ENCODE measurements at regions of chr22 and their contacts with region 1.

Region 1: GRCh38 chr22:18148293-18148965 is 1.5 kb upstream of the USP18 start:
- DNase-seq: no peak
- ATAC-seq: no peak

Region 2: GRCh38 chr22:18121950-18122544 is 26.4 kb before region 1 on chr22:
- intact Hi-C with region 1: loop called (anchors 1 kb)
- DNase-seq: no peak
- ATAC-seq: no peak

Region 3: GRCh38 chr22:19195796-19196731 is 1047.6 kb after region 1 on chr22:
- intact Hi-C with region 1: no loop called
- DNase-seq: no peak
- ATAC-seq: no peak